Activated CD8-positive, alpha-beta memory T cell treated with anti-CD3 and anti-CD28 coated beads, Interleukin-2, amount 10 ng/mL, durations not matched to agents 7 days and 5 days (primary cell): ENCODE measurements at regions of chr3 and their contacts with region 1.

Region 1: GRCh38 chr3:181700168-181701087 is 11.3 kb upstream of the SOX2 start:
- DNase-seq: peak; percentile 61
- ATAC-seq: peak; percentile 81
- H3K4me3 Mint-ChIP-seq: peak overlapping the region; percentile 63
- H3K27ac Mint-ChIP-seq: peak overlapping the region; percentile 25
- H3K4me1 Mint-ChIP-seq: peaks cover 20% of the 10 kb centered on the region
- H3K27me3 Mint-ChIP-seq: peaks cover 88% of the 10 kb centered on the region

Region 2: DNA sequence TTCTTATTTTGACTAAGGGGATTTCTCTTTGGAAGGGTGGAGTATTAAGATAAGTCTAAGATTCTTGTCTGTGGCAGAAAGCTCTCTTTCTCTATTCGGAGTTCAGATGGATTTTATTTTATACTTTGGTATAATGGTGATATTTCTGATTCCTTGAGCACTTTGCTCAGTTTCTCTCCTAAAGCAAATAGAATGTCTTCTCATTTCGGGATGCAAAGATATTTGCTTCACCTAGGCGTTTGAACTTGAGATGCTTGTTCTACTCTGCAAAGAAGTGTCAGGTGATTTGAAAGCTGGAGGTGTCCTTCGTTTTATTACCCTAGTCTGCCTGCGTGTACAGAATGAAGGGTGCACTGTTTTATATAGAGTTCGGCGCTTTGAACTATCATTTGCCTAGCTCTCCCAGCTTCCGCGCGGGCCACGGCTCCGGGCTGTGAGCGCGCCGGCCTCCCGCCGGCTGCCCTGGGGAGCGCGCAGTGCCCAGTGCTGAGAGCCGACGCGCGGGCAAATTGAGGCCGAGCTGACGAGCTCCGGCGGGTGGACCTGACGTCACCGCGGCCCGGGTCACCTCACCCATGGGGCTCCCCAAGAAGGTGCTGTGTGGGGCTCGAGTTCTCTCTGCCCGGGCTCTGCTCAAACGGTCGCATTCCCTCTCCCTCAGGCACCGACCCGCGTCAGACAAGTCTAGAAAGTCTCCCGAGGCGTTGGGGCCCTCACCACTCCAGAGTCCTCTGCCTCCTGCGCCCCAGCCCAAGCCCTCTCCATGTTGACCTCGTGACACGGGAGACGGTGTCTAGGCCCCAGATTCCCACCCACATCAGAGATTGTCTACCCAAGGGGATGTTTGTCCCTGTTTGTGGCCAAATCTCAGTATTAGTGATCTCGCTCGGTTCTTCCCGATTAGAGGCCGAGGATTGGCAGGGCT is 18.8 kb after region 1 on chr3:
- CTCF ChIA-PET with region 1: interaction called, 22 read pairs
- DNase-seq: no peak
- ATAC-seq: no peak
- H3K4me3 Mint-ChIP-seq: no peak overlapping the region
- H3K27ac Mint-ChIP-seq: no peak overlapping the region
- H3K4me1 Mint-ChIP-seq: no peaks in the 10 kb centered on the region
- H3K27me3 Mint-ChIP-seq: peaks cover 96% of the 10 kb centered on the region

Region 3: DNA sequence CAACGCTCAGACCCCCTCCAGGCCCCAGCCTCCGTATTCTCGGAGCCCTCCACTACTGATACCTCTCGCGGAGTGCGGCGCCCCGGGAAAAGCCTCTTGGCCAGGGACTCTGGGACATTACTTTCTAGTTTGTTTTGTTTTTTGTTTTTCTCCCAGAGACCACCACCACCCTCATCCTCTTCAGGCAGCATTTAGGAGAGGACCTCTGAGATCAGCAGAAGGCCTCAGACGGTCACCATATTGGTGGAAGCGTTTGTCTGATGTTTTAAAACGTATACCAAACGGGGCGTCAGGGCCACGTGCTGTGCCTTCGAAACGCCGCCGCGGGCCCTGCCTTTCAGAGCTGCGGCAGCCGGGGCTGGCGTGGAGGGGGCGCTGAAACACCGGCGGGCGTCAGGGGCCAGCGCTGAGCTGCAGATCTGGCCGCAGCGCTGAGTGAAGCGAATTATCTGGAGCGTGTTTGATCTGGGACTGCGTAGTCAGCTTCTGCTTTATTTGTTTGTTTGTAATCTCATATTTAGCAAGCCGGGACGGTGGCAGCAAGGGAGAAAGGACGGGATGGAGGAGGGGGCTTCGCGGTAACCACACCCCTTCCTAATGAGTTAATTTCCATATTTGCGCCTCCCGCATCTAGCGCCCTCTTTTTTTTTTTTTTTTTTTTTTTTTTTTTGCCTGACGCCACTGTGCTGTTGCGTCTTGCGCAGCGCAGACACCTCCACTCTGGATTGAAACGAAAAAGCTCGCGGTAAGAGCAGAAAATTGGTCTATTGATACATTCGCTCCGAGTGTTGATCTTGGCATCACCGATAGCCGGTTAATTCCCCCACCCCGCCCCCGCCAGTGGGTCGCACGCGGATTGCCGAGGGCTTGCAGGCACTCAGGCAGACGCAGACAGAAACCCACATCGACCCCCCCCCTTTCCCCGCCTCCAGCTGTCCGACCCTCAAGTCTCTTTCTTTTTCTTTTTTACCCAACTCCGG is 26.2 kb after region 1 on chr3:
- CTCF ChIA-PET with region 1: interaction called, 32 read pairs
- DNase-seq: no peak
- ATAC-seq: no peak
- H3K4me3 Mint-ChIP-seq: peak overlapping the region; percentile 28
- H3K27ac Mint-ChIP-seq: peak overlapping the region; percentile 19
- H3K4me1 Mint-ChIP-seq: peaks cover 2% of the 10 kb centered on the region
- H3K27me3 Mint-ChIP-seq: peaks cover 90% of the 10 kb centered on the region